HEK293 (cell line): ENCODE measurements at regions of chr19 and their contacts with region 1.

Region 1: GRCh38 chr19:39539519-39540332 is at the start of gene EID2:
- H3K4me3 ChIP-seq: peak within 1 kb of the TSS; percentile 83
- H3K27ac ChIP-seq: peak within 1 kb of the TSS; percentile 97
- H3K4me1 ChIP-seq: peaks cover 16% of the 10 kb centered on the region
- CTCF ChIP-seq: peak; percentile 97

Region 2: GRCh38 chr19:39480337-39481228 is 59.1 kb before region 1 on chr19 and contains the start of gene TIMM50:
- CTCF ChIA-PET with region 1: interaction called, 174 read pairs
- POLR2A ChIA-PET with region 1: interaction called, 11 read pairs
- H3K4me3 ChIP-seq: peak within 1 kb of the TSS; percentile 65
- H3K27ac ChIP-seq: peak within 1 kb of the TSS; percentile 88
- H3K4me1 ChIP-seq: peaks cover 15% of the 10 kb centered on the region
- CTCF ChIP-seq: peak; percentile 96

Region 3: GRCh38 chr19:39524495-39524894 is 15.2 kb before region 1 on chr19:
- CTCF ChIA-PET with region 1: interaction called, 31 read pairs
- POLR2A ChIA-PET with region 1: interaction called, 5 read pairs
- H3K4me3 ChIP-seq: no peak overlapping the region
- H3K27ac ChIP-seq: no peak overlapping the region
- H3K4me1 ChIP-seq: 0 out of 2 replicates have a peak, but pooled peaks cover 4% of the 10 kb centered on the region
- CTCF ChIP-seq: no peak